A673 (cell line): ENCODE measurements at regions of chr5 and their contacts with region 1.

Region 1: GRCh38 chr5:138178516-138179276 is at the starts of genes BRD8 and KIF20A:
- DNase-seq: peak; percentile 98
- H3K4me3 ChIP-seq: peak within 1 kb of the TSS; percentile 71
- H3K27ac ChIP-seq: peak within 1 kb of the TSS; percentile 92
- H3K4me1 ChIP-seq: peaks cover 7% of the 10 kb centered on the region
- H3K27me3 ChIP-seq: no peaks in the 10 kb centered on the region
- CTCF ChIP-seq: no peak
- total RNA-seq, gene BRD8: 86.7 and 97.6 TPM in 2 replicates
- total RNA-seq, gene KIF20A: 116 and 119 TPM in 2 replicates

Region 2: GRCh38 chr5:137575847-137576246 is 602.8 kb before region 1 on chr5:
- CTCF ChIA-PET with region 1: no interaction called
- POLR2A ChIA-PET with region 1: no interaction called
- intact Hi-C with region 1: no loop called
- DNase-seq: peak; percentile 98
- H3K4me3 ChIP-seq: no peak overlapping the region
- H3K27ac ChIP-seq: peak overlapping the region; percentile 68
- H3K4me1 ChIP-seq: peaks cover 38% of the 10 kb centered on the region
- H3K27me3 ChIP-seq: no peaks in the 10 kb centered on the region
- CTCF ChIP-seq: no peak

Region 3: DNA sequence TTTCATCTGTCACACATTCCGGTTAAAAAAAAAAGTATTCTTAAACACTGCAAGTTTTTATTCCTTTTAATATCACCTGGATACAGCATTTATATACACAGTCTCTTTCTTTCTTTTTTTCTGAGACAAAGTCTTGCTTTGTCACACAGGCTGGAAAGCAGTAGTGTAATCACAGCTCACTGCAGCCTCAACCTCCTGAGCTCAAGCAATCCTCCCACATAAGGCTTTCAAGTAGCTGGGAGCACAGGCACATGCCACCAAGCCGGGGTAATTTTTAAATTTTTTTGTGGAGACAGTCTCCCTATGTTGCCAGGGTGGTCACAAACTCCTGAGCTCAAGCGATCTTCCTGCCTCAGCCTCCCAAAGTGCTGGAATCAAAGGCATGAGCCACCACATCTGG is 14.1 kb after region 1 on chr5:
- CTCF ChIA-PET with region 1: no interaction called
- POLR2A ChIA-PET with region 1: no interaction called
- intact Hi-C with region 1: no loop called
- DNase-seq: no peak
- H3K4me3 ChIP-seq: no peak overlapping the region
- H3K27ac ChIP-seq: no peak overlapping the region
- H3K4me1 ChIP-seq: no peaks in the 10 kb centered on the region
- H3K27me3 ChIP-seq: no peaks in the 10 kb centered on the region
- CTCF ChIP-seq: no peak

Region 4: GRCh38 chr5:138213161-138214029 is 34.7 kb after region 1 on chr5 and contains the start of gene CDC23:
- CTCF ChIA-PET with region 1: no interaction called
- POLR2A ChIA-PET with region 1: no interaction called
- intact Hi-C with region 1: loop called (anchors 2 kb)
- DNase-seq: peak; percentile 100
- H3K4me3 ChIP-seq: peak within 1 kb of the TSS; percentile 97
- H3K27ac ChIP-seq: peak within 1 kb of the TSS; percentile 83
- H3K4me1 ChIP-seq: peaks cover 12% of the 10 kb centered on the region
- H3K27me3 ChIP-seq: no peaks in the 10 kb centered on the region
- CTCF ChIP-seq: no peak
- total RNA-seq, gene CDC23: 54.0 and 55.1 TPM in 2 replicates

Region 5: GRCh38 chr5:138282920-138283742 is 104.4 kb after region 1 on chr5:
- CTCF ChIA-PET with region 1: no interaction called
- POLR2A ChIA-PET with region 1: no interaction called
- intact Hi-C with region 1: loop called (anchors 10 kb)
- DNase-seq: peak; percentile 57
- H3K4me3 ChIP-seq: no peak overlapping the region
- H3K27ac ChIP-seq: no peak overlapping the region
- H3K4me1 ChIP-seq: no peaks in the 10 kb centered on the region
- H3K27me3 ChIP-seq: no peaks in the 10 kb centered on the region
- CTCF ChIP-seq: peak; percentile 60

Region 6: GRCh38 chr5:138408023-138408422 is 229.3 kb after region 1 on chr5:
- CTCF ChIA-PET with region 1: no interaction called
- POLR2A ChIA-PET with region 1: no interaction called
- intact Hi-C with region 1: loop called (anchors 2 kb)
- DNase-seq: peak; percentile 45
- H3K4me3 ChIP-seq: no peak overlapping the region
- H3K27ac ChIP-seq: no peak overlapping the region
- H3K4me1 ChIP-seq: no peaks in the 10 kb centered on the region
- H3K27me3 ChIP-seq: no peaks in the 10 kb centered on the region
- CTCF ChIP-seq: no peak

Region 7: DNA sequence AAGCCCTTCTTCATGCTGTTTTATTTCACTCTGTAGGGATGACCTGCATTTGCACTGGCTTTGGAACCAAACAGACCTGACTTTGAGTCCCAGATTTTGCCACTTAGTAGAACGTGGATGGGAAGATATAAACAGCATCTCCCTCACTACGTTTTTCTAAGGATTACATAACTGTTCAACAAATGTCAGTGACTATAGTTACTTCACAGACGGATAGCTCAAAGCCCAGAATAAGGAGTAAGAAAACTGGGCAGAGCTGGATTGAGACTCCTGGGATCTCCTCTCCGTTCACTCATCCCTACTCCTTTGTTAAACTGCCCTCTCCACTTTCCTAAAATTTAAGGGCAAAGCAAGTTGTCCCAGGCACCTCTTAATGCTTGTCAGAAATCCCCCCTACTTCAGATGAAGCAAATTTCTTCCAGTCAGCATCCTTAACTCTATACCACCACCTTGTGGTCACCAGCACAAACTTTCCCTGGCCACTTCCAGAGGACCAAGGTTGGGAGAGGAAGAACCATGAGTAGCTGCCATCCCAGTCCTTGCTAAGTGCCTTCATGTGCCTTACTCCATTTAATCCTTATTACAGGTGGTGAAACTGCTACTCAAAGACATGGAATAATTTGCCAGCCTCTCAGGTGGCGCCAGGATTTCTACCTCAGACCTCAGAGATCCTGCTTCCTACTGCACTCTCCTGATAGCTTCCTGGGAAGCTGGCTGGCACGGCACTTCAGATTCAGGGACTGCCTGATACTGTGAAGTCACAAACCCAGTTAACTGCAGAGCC is 325.0 kb after region 1 on chr5:
- CTCF ChIA-PET with region 1: interaction called, 4 read pairs
- POLR2A ChIA-PET with region 1: no interaction called
- intact Hi-C with region 1: loop called (anchors 5 kb)
- DNase-seq: peak; percentile 80
- H3K4me3 ChIP-seq: no peak overlapping the region
- H3K27ac ChIP-seq: no peak overlapping the region
- H3K4me1 ChIP-seq: peaks cover 12% of the 10 kb centered on the region
- H3K27me3 ChIP-seq: no peaks in the 10 kb centered on the region
- CTCF ChIP-seq: peak; percentile 79

Region 8: GRCh38 chr5:138542956-138543729 is 364.4 kb after region 1 on chr5 and contains the start of gene ETF1:
- CTCF ChIA-PET with region 1: no interaction called
- POLR2A ChIA-PET with region 1: no interaction called
- intact Hi-C with region 1: loop called (anchors 5 kb)
- DNase-seq: peak; percentile 100
- H3K4me3 ChIP-seq: peak within 1 kb of the TSS; percentile 87
- H3K27ac ChIP-seq: peak within 1 kb of the TSS; percentile 99
- H3K4me1 ChIP-seq: peaks cover 28% of the 10 kb centered on the region
- H3K27me3 ChIP-seq: no peaks in the 10 kb centered on the region
- CTCF ChIP-seq: no peak
- total RNA-seq, gene ETF1: 172 and 191 TPM in 2 replicates

Region 9: DNA sequence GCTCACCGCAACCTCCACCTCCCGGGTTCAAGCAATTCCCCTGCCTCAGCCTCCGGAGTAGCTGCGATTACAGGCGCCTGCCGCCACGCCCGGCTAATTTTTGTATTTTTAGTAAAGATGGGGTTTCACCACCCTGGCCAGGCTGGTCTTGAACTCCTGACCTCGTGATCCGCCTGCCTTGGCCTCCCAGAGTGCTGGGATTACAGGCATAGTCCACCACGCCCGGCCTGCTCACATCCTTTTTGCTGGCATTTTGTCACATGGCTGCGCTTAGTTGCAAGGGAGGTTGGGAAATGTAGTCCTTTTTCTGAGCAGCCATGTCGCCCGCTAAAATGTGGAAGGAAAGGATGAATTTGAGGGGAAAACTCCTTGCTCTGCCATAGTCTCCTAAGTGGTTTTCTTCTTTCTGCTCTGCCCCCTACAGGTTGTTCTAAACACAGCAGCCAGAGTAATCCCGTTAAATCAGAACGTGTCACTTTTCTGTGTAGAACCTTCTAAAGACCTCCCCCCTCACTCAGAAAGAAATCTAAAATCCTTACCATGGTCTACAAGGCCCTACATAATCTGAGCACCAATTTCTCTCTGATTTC is 454.3 kb after region 1 on chr5:
- CTCF ChIA-PET with region 1: no interaction called
- POLR2A ChIA-PET with region 1: no interaction called
- intact Hi-C with region 1: no loop called
- DNase-seq: peak; percentile 91
- H3K4me3 ChIP-seq: no peak overlapping the region
- H3K27ac ChIP-seq: no peak overlapping the region
- H3K4me1 ChIP-seq: no peaks in the 10 kb centered on the region
- H3K27me3 ChIP-seq: no peaks in the 10 kb centered on the region
- CTCF ChIP-seq: peak; percentile 70